Heart right ventricle (tissue), 16 donors: ENCODE measurements at regions of chr3 and their contacts with region 1.

Region 1: DNA sequence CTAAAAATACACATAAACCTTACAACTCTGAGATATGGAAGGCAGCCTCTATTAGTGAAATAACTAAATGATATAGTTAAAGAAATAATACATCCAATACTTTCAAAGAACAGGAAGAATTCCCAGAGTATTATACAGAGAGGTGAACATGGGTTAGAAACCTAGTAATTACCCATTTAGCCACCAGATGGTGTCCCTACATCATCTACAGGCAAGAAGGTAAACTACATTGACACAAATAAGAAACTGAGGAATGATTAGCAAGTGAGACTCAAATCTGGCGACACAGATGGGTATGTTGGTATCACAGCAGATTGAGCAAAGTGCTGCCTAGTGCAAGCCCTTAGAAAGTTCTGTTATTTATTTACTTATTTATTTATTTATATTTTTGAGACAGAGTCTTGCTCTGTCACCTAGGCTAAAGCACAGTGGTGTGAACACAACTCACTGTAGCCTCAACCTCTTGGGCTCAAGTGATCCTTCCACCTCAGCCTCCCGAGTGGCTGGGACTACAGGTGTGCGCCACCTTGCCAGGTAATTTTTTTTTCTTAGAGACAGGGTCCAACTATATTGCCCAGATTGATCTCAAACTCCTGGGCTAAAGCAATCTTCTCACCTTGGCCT is 28.2 kb downstream of the NEK4 start:
- DNase-seq: no peak
- ATAC-seq: peak in 1 of 8 donors; percentile 42
- H3K4me3 ChIP-seq: no peak overlapping the region
- H3K27ac ChIP-seq: no peak overlapping the region
- H3K4me1 ChIP-seq: no peaks in the 10 kb centered on the region
- H3K27me3 ChIP-seq: no peaks in the 10 kb centered on the region
- CTCF ChIP-seq: peak; percentile 35 to 71 (median 60)

Region 2: GRCh38 chr3:52705688-52706686 is 36.5 kb before region 1 on chr3 and contains the starts of genes GLT8D1 and SPCS1:
- intact Hi-C with region 1: no loop called
- DNase-seq: peak; percentile 84 to 87
- ATAC-seq: peak; percentile 95 to 97 (median 96)
- H3K4me3 ChIP-seq: peak within 1 kb of the TSS; percentile 48 to 97 (median 86)
- H3K27ac ChIP-seq: peak within 1 kb of the TSS; percentile 60 to 97 (median 92)
- H3K4me1 ChIP-seq: peaks cover 8 to 41% (median 31%) of the 10 kb centered on the region in 9 donors
- H3K27me3 ChIP-seq: no peaks in the 10 kb centered on the region
- CTCF ChIP-seq: no peak
- total RNA-seq, gene GLT8D1: 23.0 to 31.9 (median 28.4) TPM
- total RNA-seq, gene SPCS1: 74.3 to 97.6 (median 82.2) TPM

Region 3: DNA sequence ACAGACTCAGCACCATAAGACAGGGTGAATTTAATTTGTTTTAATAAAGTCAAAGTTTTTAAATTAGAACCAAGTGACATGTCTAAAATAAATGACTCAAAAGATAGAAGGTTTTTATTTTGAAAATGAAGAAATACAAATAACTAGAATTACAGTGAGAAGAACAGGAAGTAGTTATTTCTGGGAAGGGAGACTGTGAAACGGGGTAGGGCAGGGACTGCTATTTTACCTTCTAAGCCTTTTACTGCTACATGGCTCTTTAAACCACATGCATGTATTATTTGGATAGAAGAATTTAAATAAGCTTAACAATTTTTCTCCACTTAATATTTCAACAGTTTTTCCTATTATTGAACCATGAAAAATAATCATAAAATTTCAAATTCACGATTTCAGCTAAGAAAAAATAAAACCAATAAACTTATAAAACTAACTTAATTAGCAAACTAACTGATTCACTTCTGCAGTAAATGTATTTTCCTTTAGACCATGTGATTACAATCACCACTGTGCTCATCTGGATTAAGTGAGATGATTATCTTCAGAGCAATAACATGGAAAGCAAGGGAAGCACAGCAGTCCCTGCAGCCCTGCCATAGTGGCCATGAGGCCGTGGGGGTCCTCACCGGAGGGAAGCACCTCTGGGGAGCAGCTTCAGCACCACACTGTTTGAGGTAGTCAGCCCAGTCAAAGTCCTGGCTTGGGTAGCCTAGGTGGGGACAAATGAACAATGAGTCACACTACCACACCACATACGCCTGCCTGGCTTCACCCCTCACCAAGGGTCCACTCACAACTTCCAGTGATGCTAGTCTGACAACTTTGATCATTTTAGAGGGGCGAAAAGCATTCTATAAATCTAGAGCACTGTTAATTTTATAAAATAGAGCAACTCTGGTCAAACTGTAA is 183.1 kb after region 1 on chr3:
- intact Hi-C with region 1: loop called in 7 of 10 experiments (anchors 5 to 10 kb)
- DNase-seq: no peak
- ATAC-seq: no peak
- H3K4me3 ChIP-seq: no peak overlapping the region
- H3K27ac ChIP-seq: no peak overlapping the region
- H3K4me1 ChIP-seq: peaks cover 0 to 38% (median 0%) of the 10 kb centered on the region in 9 donors
- H3K27me3 ChIP-seq: no peaks in the 10 kb centered on the region
- CTCF ChIP-seq: no peak